ENCODE measurements at regions of chr2 and their contacts with region 1.

Region 1: GRCh38 chr2:226756129-226756528 is 43.5 kb downstream of the IRS1 start:
- DNase-seq: no peak
- ATAC-seq: peak; percentile 22 to 36 (median 32)
- H3K4me3 ChIP-seq: no peak overlapping the region
- H3K27ac ChIP-seq: peak overlapping the region; percentile 91
- H3K4me1 ChIP-seq: peaks cover 59% of the 10 kb centered on the region
- H3K27me3 ChIP-seq: no peaks in the 10 kb centered on the region
- CTCF ChIP-seq: no peak

Region 2: GRCh38 chr2:226742347-226742746 is 13.8 kb before region 1 on chr2:
- intact Hi-C with region 1: loop called in 1 of 2 experiments (anchors 2 kb)
- DNase-seq: peak; percentile 40 to 69
- ATAC-seq: peak; percentile 74 to 91 (median 89)
- H3K4me3 ChIP-seq: peak overlapping the region; percentile 48
- H3K27ac ChIP-seq: peak overlapping the region; percentile 91
- H3K4me1 ChIP-seq: peaks cover 58% of the 10 kb centered on the region
- H3K27me3 ChIP-seq: no peaks in the 10 kb centered on the region
- CTCF ChIP-seq: no peak

Region 3: DNA sequence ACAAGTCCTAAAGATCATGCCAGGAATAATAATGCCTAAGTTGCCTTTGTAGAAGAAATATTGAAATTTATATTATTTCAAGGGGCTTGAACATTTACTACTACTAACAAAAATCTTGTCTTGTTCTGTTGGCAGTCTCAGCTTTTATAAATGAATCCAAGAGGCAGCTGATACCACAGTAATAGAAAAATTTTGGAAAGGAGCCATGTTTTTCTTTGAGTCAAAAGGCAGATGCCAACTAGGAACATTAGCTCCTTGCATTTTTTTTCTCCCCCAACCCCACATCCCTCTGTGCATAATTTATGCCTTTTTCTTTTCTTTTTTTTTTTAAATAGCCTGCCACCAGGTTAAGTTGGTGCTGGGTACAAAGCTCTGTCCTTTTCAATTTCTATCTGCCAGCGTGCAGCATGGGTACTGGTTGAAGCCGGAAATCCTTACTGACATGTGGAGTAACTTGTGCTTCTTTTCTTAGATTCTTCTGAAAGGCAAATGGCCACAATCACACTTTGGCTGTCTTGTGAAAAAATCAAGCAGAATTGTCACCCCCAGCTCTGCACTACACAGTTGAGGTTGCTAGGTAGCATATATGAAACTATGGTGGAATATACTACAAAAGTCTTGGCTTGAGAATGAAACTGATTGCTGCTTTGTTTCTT is 178.5 kb after region 1 on chr2:
- intact Hi-C with region 1: no loop called
- DNase-seq: no peak
- ATAC-seq: no peak
- H3K4me3 ChIP-seq: no peak overlapping the region
- H3K27ac ChIP-seq: no peak overlapping the region
- H3K4me1 ChIP-seq: no peaks in the 10 kb centered on the region
- H3K27me3 ChIP-seq: no peaks in the 10 kb centered on the region
- CTCF ChIP-seq: no peak

Measured in psoas muscle (tissue), 8 donors.